Caco-2 (cell line): ENCODE measurements at regions of chr5 and their contacts with region 1.

Region 1: DNA sequence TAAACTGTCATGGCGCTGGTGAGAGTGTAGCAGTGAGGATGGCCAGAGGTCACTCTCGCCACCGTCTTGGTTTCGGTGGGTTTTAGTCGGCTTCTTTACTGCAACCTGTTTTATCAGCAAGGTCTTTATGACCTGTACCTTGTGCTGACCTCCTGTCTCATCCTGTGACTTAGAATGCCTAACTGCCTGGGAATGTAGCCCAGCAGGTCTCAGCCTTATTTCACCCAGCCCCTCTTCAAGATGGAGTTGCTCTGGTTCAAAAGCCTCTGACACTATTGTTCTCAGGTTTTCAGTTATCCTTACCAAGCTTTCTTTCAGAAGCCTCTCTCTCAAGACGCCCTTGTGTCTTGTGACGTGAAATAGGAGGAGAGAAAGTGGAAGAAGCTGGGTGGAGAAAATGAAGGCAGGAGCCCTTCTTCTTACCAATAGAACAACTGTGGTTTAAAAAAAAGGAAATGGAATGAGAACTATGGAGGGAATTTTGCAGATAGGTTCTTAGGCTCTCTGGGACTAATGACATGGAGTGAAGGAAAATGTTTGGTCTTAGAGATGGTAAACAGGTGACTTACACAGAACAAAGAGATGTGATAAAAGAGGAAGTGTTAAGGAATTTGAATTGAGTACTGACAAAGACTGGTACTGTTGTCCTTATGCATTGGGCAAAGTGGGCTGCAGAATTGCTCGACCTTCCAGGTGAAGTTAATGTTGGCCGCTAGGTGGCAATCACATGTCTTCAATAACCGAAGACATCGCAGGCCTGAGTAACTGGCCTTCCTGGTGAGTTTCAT is 133.3 kb upstream of the RAI14 start:
- DNase-seq: peak; percentile 86 to 90
- H3K4me3 ChIP-seq: no peak overlapping the region
- H3K4me3 Mint-ChIP-seq: peak overlapping the region; percentile 50
- H3K27ac Mint-ChIP-seq: peak overlapping the region; percentile 90
- H3K4me1 ChIP-seq: peaks cover 34% of the 10 kb centered on the region
- H3K4me1 Mint-ChIP-seq: peaks cover 39% of the 10 kb centered on the region
- H3K27me3 ChIP-seq: no peaks in the 10 kb centered on the region
- H3K27me3 Mint-ChIP-seq: no peaks in the 10 kb centered on the region
- CTCF ChIP-seq: peak; percentile 66 to 89

Region 2: DNA sequence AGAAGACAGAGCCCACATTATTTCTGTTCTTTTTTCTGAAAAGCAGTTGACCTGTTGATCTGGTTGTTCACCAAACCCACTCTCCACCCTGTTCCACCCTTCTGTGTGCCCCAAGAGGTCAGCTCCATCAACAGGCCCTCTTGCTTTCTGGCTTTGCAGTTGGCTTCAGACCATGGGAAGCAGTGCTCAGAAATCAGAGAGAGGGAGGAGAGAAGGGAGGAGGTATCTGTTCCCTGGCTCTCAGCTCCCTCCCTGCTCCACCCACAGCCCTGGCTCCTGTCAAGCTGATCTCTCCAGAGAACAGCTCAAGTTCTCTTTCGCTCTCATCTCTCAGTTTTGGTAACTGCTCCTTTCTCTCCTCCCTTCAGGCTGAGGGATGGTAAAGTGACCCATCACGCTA is 10.9 kb before region 1 on chr5:
- CTCF ChIA-PET with region 1: no interaction called
- POLR2A ChIA-PET with region 1: no interaction called
- intact Hi-C with region 1: loop called (anchors 1 kb)
- DNase-seq: no peak
- H3K4me3 ChIP-seq: no peak overlapping the region
- H3K4me3 Mint-ChIP-seq: no peak overlapping the region
- H3K27ac Mint-ChIP-seq: peak overlapping the region; percentile 0
- H3K4me1 ChIP-seq: peaks cover 30% of the 10 kb centered on the region
- H3K4me1 Mint-ChIP-seq: peaks cover 38% of the 10 kb centered on the region
- H3K27me3 ChIP-seq: no peaks in the 10 kb centered on the region
- H3K27me3 Mint-ChIP-seq: no peaks in the 10 kb centered on the region
- CTCF ChIP-seq: no peak

Region 3: DNA sequence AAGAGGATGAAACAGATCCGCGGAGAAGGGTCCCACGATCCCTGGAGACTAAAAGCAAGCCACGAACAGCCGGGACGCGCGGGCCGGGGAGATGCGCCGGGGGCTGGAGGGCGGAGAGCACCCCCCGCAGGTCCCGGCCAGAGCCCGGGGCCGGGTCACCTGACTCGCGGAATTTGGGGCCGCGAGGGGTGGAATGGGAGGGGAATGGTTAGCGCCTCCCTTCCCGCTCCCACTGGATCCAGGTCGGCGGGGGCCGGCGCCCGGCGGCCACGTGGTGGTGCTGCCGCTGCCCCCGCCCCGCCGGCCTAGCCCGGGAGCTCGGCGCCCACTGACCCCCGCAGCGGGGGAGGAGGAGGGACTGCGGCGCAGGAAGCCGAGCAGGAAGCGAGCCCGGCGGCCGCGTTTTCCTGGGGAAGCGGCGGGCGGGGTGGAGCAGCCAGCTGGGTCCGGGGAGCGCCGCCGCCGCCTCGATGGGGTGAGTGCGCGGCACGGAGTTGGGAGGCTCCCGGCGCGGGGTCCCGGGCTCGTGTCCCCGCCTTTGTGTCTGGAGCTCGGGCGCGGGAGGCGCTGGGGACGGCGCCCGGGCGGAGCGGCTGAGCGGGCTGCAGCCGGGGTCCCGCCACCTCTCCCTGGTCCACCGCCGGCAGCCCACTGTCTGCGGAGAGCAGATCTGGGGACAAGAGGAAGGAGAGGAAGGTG is 133.4 kb after region 1 on chr5 and contains the start of gene RAI14:
- CTCF ChIA-PET with region 1: interaction called, 8 read pairs
- POLR2A ChIA-PET with region 1: no interaction called
- intact Hi-C with region 1: loop called (anchors 1 kb)
- DNase-seq: peak; percentile 90 to 93
- H3K4me3 ChIP-seq: peak within 1 kb of the TSS; percentile 94
- H3K4me3 Mint-ChIP-seq: peak within 1 kb of the TSS; percentile 69
- H3K27ac Mint-ChIP-seq: peak within 1 kb of the TSS; percentile 48
- H3K4me1 ChIP-seq: peaks cover 12% of the 10 kb centered on the region; the same call in 1 of the 2 replicates
- H3K4me1 Mint-ChIP-seq: peaks cover 14% of the 10 kb centered on the region
- H3K27me3 ChIP-seq: no peaks in the 10 kb centered on the region
- H3K27me3 Mint-ChIP-seq: no peaks in the 10 kb centered on the region
- CTCF ChIP-seq: no peak
- total RNA-seq, gene RAI14: 71.5 and 73.9 TPM in 2 replicates

Region 4: GRCh38 chr5:34699155-34700077 is 176.6 kb after region 1 on chr5:
- CTCF ChIA-PET with region 1: no interaction called
- POLR2A ChIA-PET with region 1: no interaction called
- intact Hi-C with region 1: loop called (anchors 1 kb)
- DNase-seq: peak; percentile 83 to 87
- H3K4me3 ChIP-seq: no peak overlapping the region
- H3K4me3 Mint-ChIP-seq: peak overlapping the region; percentile 68
- H3K27ac Mint-ChIP-seq: peak overlapping the region; percentile 62
- H3K4me1 ChIP-seq: peaks cover 65% of the 10 kb centered on the region
- H3K4me1 Mint-ChIP-seq: peaks cover 50% of the 10 kb centered on the region
- H3K27me3 ChIP-seq: no peaks in the 10 kb centered on the region
- H3K27me3 Mint-ChIP-seq: no peaks in the 10 kb centered on the region
- CTCF ChIP-seq: no peak

Region 5: GRCh38 chr5:34822956-34823715 is 300.3 kb after region 1 on chr5:
- CTCF ChIA-PET with region 1: no interaction called
- POLR2A ChIA-PET with region 1: no interaction called
- intact Hi-C with region 1: loop called (anchors 2 kb)
- DNase-seq: peak in 1 of 2 experiments; percentile 33
- H3K4me3 ChIP-seq: no peak overlapping the region
- H3K4me3 Mint-ChIP-seq: no peak overlapping the region
- H3K27ac Mint-ChIP-seq: no peak overlapping the region
- H3K4me1 ChIP-seq: peaks cover 14% of the 10 kb centered on the region; the same call in 1 of the 2 replicates
- H3K4me1 Mint-ChIP-seq: peaks cover 15% of the 10 kb centered on the region
- H3K27me3 ChIP-seq: no peaks in the 10 kb centered on the region
- H3K27me3 Mint-ChIP-seq: no peaks in the 10 kb centered on the region
- CTCF ChIP-seq: no peak

Region 6: DNA sequence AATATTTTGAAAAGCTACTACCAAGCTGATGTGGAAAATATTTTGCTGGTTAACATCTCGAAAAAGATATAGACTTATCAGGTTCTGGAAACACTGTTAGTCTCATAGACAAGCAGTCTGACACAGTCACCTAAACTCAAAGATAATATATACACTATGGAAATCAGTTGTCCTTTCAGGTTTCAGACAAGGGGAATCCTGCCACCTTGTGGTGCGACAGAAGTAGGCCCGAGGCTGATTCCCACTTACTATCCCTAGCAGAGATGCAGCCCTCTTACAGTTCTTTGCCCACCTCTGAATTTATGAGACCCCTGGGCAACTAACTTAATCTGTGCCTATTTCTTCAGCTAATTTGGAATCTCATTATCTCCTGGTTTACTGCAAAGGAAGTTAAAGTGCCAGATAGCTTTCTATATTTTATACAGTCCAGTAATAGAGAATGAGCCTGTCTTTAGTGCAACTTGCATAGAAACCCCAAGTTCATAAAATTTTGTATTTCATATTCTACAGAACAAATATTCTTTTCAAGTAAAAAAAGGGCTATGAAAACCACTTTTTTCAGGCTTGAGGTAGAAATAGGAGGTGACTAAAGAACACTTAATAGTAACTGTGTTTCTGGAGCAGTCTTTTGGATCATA is 375.6 kb after region 1 on chr5:
- CTCF ChIA-PET with region 1: no interaction called
- POLR2A ChIA-PET with region 1: no interaction called
- intact Hi-C with region 1: loop called (anchors 1 kb)
- DNase-seq: peak; percentile 68 to 75
- H3K4me3 ChIP-seq: no peak overlapping the region
- H3K4me3 Mint-ChIP-seq: no peak overlapping the region
- H3K27ac Mint-ChIP-seq: peak overlapping the region; percentile 45
- H3K4me1 ChIP-seq: peaks cover 15% of the 10 kb centered on the region; the same call in 1 of the 2 replicates
- H3K4me1 Mint-ChIP-seq: no peaks in the 10 kb centered on the region
- H3K27me3 ChIP-seq: no peaks in the 10 kb centered on the region
- H3K27me3 Mint-ChIP-seq: no peaks in the 10 kb centered on the region
- CTCF ChIP-seq: peak; percentile 85 to 93